Posterior cingulate gyrus (tissue), 11 donors: ENCODE measurements at regions of chr9 and their contacts with region 1.

Region 1: GRCh38 chr9:20622330-20623020 is at the start of gene MLLT3:
- DNase-seq: peak; percentile 93 to 99 (median 96)

Region 2: GRCh38 chr9:20356403-20357035 is 266.0 kb before region 1 on chr9:
- intact Hi-C with region 1: loop called (anchors 5 kb)
- DNase-seq: peak; percentile 38 to 93 (median 67)

Region 3: DNA sequence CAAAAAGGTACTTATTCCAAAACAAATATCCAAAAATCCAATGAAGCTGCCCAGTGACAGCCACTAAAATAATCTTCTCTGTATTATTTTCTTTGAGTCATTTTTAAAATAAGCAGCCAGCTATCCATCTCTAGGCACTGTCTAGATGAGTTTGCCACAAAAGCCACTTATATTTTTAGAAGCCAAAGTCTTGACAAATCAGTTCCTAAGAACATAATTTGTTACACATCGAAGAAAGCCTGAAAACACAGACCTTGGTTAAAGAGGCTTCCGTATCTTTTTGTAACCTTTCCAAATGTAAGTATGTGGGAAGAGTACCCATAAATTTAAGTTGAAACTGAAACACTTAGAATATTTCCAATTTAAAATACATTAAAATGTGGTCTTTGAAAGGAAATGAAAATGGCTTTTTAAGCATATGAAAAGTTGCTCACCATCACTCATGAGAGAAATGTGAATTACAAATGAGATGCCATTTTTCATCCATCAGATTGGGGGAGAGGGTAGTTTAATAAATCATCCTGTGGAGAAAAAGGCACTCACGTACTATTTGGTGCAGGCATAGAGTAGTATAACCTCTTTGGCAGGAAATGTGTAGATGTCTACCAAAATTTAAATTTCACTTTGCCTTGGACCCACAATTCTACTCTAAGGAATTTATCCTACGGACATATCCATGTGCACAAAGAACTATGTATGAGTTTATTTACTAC is 180.6 kb before region 1 on chr9:
- intact Hi-C with region 1: loop called (anchors 10 kb)
- DNase-seq: no peak

Region 4: GRCh38 chr9:20684035-20684872 is 61.8 kb after region 1 on chr9 and contains the start of gene FOCAD:
- intact Hi-C with region 1: loop called (anchors 5 kb)
- DNase-seq: peak; percentile 92 to 100 (median 98)

Region 5: GRCh38 chr9:20941174-20941690 is 318.8 kb after region 1 on chr9:
- intact Hi-C with region 1: loop called (anchors 1 kb)
- DNase-seq: peak in 7 of 10 donors; percentile 21 to 88 (median 54)

Region 6: GRCh38 chr9:21110708-21111576 is 488.5 kb after region 1 on chr9:
- intact Hi-C with region 1: loop called (anchors 5 kb)
- DNase-seq: no peak